ENCODE measurements at regions of chr16 and their contacts with region 1.

Region 1: DNA sequence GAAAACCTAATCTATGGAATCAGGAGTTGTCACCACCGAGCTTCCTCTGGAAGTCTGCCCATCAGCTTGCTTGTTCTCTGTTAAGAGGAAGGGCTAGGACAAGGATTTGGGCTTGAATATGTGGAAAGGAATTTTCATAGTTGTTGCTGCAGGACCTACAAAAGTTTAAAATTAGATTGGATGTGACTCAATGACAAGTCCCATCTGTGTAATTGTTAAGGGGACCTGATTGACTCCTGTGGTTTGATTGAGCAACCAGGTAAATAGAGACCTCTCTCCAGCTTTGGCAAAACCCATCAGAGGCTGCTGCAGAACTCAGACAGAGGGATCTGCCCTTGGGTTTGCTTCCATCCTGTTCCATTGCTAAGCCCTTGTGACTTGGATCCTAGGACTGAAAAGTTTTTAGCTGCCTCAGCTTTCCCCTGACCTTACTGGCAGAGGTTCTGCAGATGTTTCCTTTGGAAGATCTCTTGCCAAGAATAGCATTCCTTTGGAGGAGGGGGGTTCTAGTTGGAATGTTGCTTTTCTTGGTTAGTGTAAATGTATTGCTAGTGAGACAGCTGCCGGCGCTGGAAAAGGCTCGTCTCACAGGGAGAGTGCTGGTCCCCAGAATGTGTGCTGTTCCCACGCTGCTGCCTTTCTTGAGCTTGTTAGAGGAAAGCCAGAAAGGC is 50.0 kb downstream of the SF3B3 start:
- DNase-seq: peak; percentile 97
- ATAC-seq: peak; percentile 73
- H3K4me3 ChIP-seq: no peak overlapping the region
- H3K27ac ChIP-seq: peak overlapping the region; percentile 79; the same call in 1 of the 2 replicates
- H3K4me1 ChIP-seq: peaks cover 40% of the 10 kb centered on the region
- H3K27me3 ChIP-seq: no peaks in the 10 kb centered on the region
- CTCF ChIP-seq: no peak
- POLR2A ChIP-seq: no peak
- RAD21 ChIP-seq: no peak

Region 2: DNA sequence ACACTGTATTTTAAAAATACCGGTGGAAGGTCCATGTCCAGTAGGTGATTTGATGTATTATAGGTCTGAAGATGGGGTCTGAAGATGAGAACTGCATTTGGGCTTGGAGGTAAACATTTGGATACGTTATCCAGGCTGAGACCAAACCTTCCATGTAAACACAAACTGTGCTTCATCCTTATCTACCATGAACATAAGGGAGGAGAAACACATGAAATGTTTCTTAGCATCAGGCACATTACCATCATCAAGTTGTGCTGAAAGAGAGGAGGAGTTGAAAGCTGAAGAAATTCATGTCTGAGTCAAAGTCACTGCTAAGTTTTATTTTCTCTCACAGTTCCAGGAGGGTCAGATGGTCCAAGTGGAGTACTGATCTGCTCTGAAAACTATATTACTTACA is 38.6 kb before region 1 on chr16:
- CTCF ChIA-PET with region 1: no interaction called
- POLR2A ChIA-PET with region 1: no interaction called
- dilution Hi-C with region 1: no loop called
- in situ Hi-C with region 1: no loop called
- intact Hi-C with region 1: loop called (anchors 2 kb)
- DNase-seq: no peak
- ATAC-seq: no peak
- H3K4me3 ChIP-seq: no peak overlapping the region
- H3K27ac ChIP-seq: no peak overlapping the region
- H3K4me1 ChIP-seq: no peaks in the 10 kb centered on the region
- H3K27me3 ChIP-seq: no peaks in the 10 kb centered on the region
- CTCF ChIP-seq: no peak
- POLR2A ChIP-seq: no peak
- RAD21 ChIP-seq: no peak

Region 3: DNA sequence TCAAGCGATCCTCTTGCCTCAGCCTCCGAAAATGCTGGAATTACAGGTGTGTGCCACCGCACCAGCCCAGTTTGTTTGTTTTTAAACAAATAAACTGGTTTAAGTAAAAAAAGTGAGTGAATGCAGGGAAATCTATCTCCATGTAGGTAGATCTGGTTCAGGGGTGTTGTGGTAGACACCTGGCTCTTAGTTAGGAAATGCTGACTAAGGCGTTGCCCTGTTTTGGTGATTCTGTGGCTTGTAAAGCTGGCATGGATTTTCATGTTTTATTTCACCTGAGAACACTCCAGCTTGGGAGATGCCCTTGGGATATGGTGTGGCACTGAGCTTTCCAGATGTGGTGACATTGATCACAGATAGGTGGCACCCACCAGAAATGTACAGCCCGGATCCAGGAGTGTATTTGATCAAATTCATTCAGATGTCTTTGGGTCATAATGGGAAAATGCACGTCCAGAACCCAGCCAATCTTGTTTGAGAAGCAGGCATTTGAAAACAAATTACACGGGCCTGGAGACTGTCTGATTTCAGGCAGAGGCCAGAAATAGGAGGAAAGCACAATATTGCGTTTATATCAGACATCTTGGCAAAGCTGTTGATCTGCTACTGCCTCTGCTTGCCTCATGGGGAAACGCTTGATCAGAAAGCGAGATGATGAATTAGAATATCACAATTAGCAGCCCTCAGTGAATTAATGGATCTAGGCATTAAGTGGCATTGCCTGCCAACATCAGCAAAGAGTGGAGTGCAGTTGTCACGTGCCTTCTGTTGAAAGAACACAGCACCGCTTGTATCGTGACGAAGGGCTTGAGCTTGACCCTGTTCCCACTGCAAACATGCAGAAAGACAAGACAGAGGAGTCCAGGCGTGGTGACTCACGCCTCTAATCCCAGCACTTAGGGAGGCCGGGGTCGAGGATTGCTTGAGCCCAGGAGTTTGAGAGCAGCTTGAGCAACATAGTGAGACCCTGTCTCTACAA is 65.5 kb after region 1 on chr16:
- CTCF ChIA-PET with region 1: no interaction called
- POLR2A ChIA-PET with region 1: no interaction called
- dilution Hi-C with region 1: no loop called
- in situ Hi-C with region 1: no loop called
- intact Hi-C with region 1: loop called (anchors 5 kb)
- DNase-seq: peak; percentile 87
- ATAC-seq: peak; percentile 58
- H3K4me3 ChIP-seq: no peak overlapping the region
- H3K27ac ChIP-seq: peak overlapping the region; percentile 25; the same call in 1 of the 2 replicates
- H3K4me1 ChIP-seq: peaks cover 11% of the 10 kb centered on the region
- H3K27me3 ChIP-seq: no peaks in the 10 kb centered on the region
- CTCF ChIP-seq: no peak
- POLR2A ChIP-seq: no peak
- RAD21 ChIP-seq: no peak

Measured in IMR-90 (cell line).